CD14-positive monocyte (primary cell): ENCODE measurements at regions of chr3 and their contacts with region 1.

Region 1: GRCh38 chr3:71495708-71496472 is 87.6 kb downstream of the FOXP1 start:
- DNase-seq: peak; percentile 65 to 79 (median 79)
- H3K4me3 ChIP-seq: peak overlapping the region in 2 of 3 experiments; percentile 17 to 42
- H3K4me3 Mint-ChIP-seq: peak overlapping the region; percentile 56 to 65
- H3K27ac ChIP-seq: peak overlapping the region; percentile 41 to 83
- H3K27ac Mint-ChIP-seq: peak overlapping the region; percentile 83 to 96 (median 91)
- H3K4me1 ChIP-seq: peaks cover 34 to 45% of the 10 kb centered on the region in 2 donors
- H3K4me1 Mint-ChIP-seq: peaks cover 50% of the 10 kb centered on the region
- H3K27me3 ChIP-seq: no peaks in the 10 kb centered on the region
- H3K27me3 Mint-ChIP-seq: peaks cover 0 to 2% (median 0%) of the 10 kb centered on the region in 3 donors
- CTCF ChIP-seq: no peak

Region 2: GRCh38 chr3:71444028-71444860 is 51.6 kb before region 1 on chr3:
- intact Hi-C with region 1: loop called in 1 of 2 experiments (anchors 5 kb)
- DNase-seq: peak; percentile 83 to 91 (median 87)
- H3K4me3 ChIP-seq: peak overlapping the region in 1 of 3 experiments; percentile 55
- H3K4me3 Mint-ChIP-seq: peak overlapping the region; percentile 65 to 79
- H3K27ac ChIP-seq: peak overlapping the region; percentile 80 to 93
- H3K27ac Mint-ChIP-seq: peak overlapping the region; percentile 98 to 100 (median 99)
- H3K4me1 ChIP-seq: peaks cover 96 to 97% of the 10 kb centered on the region in 2 donors
- H3K4me1 Mint-ChIP-seq: peaks cover 95% of the 10 kb centered on the region
- H3K27me3 ChIP-seq: no peaks in the 10 kb centered on the region
- H3K27me3 Mint-ChIP-seq: peaks cover 0 to 2% (median 0%) of the 10 kb centered on the region in 3 donors
- CTCF ChIP-seq: no peak

Region 3: DNA sequence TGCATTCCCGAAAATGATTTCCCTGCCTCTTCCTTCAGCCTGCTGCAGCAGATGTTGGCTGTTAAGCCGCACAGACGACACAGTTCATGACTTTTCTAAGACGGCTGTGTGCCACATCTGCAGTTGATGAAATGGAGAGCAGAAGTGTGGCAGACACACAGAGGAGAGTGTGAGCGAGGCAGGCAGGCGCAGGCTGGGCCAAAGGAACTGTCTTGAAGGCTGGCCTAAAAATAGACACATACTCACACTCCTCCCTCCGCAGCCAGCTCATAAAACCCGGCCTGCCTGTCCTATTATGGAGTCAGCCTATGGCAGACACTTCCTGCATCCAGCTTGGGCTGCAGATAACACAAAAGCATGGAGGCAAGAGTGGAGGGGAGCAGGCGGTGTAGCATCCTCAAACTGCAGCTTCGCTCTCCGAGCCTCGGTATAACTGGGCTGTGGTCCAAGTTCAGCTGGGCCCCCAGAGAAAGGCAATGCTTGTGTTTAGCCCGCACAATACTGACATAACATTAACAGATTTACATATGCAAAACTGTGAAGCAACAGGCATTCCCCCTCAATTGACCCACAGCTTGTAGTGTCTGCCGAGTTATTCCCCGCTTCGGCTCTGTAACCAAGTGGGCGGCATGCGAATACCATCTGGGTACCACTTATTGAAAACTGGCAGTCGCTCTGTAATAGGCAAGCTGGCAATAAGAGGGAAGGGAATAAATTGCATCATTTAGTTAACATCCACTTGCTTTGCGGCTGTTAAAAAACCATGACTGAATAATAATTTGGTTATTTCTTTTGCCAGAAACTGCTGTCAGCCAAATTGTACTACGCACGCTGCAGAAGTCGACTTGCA is 46.9 kb after region 1 on chr3:
- intact Hi-C with region 1: loop called (anchors 5 to 10 kb)
- DNase-seq: peak; percentile 68 to 84 (median 74)
- H3K4me3 ChIP-seq: peak overlapping the region; percentile 27 to 74 (median 44)
- H3K4me3 Mint-ChIP-seq: peak overlapping the region; percentile 80 to 91
- H3K27ac ChIP-seq: peak overlapping the region; percentile 73 to 90
- H3K27ac Mint-ChIP-seq: peak overlapping the region; percentile 91 to 97 (median 96)
- H3K4me1 ChIP-seq: peaks cover 66 to 77% of the 10 kb centered on the region in 2 donors
- H3K4me1 Mint-ChIP-seq: peaks cover 77% of the 10 kb centered on the region
- H3K27me3 ChIP-seq: no peaks in the 10 kb centered on the region
- H3K27me3 Mint-ChIP-seq: no peaks in the 10 kb centered on the region
- CTCF ChIP-seq: no peak

Region 4: DNA sequence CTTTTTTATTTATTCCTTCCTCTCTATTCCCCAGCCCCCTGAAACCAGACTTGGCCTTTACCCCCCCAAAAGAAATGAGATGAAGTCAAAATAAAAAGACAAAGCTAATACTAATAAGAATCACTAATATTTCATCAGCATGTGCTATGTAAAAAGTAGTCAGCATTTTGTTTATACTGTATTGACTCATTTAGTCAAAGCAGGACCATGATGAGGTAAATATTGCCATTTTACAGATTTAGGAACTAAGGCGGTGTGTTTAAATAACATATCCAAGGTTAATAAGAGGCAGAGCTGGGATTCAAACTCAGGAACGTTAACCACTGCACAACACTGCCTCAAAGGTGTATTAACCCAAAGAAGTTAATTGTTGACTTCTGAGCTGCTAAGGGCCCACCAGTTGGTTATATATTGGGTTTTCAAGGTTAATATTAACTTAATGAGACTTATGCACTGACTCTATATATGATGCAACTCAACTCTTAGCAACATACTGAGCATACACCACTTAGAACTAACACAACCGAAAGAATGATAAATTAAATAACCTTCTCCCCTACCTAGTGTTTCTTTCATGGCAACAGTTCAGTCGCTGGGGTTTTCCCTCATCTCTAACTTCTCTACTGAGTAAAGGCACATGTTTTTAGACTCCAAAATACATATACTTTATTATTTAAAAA is 53.0 kb after region 1 on chr3:
- intact Hi-C with region 1: loop called (anchors 5 to 10 kb)
- DNase-seq: peak in 1 of 3 donors; percentile 31
- H3K4me3 ChIP-seq: peak overlapping the region in 1 of 3 experiments; percentile 70
- H3K4me3 Mint-ChIP-seq: no peak overlapping the region
- H3K27ac ChIP-seq: peak overlapping the region; percentile 86 to 87
- H3K27ac Mint-ChIP-seq: peak overlapping the region; percentile 90 to 98 (median 95)
- H3K4me1 ChIP-seq: peaks cover 71 to 84% of the 10 kb centered on the region in 2 donors
- H3K4me1 Mint-ChIP-seq: peaks cover 70% of the 10 kb centered on the region
- H3K27me3 ChIP-seq: no peaks in the 10 kb centered on the region
- H3K27me3 Mint-ChIP-seq: no peaks in the 10 kb centered on the region
- CTCF ChIP-seq: no peak